ENCODE measurements at regions of chr2 and their contacts with region 1.

Region 1: GRCh38 chr2:70258532-70258874 is 566 bp downstream of the PCYOX1 start:
- DNase-seq: no peak
- H3K4me3 Mint-ChIP-seq: peak overlapping the region; percentile 82
- H3K27ac Mint-ChIP-seq: peak overlapping the region; percentile 58
- H3K4me1 Mint-ChIP-seq: peaks cover 24% of the 10 kb centered on the region
- H3K27me3 Mint-ChIP-seq: no peaks in the 10 kb centered on the region

Region 2: GRCh38 chr2:70190418-70191243 is 67.9 kb before region 1 on chr2 and contains the start of gene C2orf42:
- CTCF ChIA-PET with region 1: interaction called, 4 read pairs
- POLR2A ChIA-PET with region 1: interaction called, 27 read pairs
- DNase-seq: peak; percentile 96
- H3K4me3 Mint-ChIP-seq: peak within 1 kb of the TSS; percentile 82
- H3K27ac Mint-ChIP-seq: peak within 1 kb of the TSS; percentile 87
- H3K4me1 Mint-ChIP-seq: peaks cover 23% of the 10 kb centered on the region
- H3K27me3 Mint-ChIP-seq: no peaks in the 10 kb centered on the region
- total RNA-seq, gene C2orf42: 28.8 to 32.2 TPM